ENCODE measurements at regions of chr1 and their contacts with region 1.

Region 1: DNA sequence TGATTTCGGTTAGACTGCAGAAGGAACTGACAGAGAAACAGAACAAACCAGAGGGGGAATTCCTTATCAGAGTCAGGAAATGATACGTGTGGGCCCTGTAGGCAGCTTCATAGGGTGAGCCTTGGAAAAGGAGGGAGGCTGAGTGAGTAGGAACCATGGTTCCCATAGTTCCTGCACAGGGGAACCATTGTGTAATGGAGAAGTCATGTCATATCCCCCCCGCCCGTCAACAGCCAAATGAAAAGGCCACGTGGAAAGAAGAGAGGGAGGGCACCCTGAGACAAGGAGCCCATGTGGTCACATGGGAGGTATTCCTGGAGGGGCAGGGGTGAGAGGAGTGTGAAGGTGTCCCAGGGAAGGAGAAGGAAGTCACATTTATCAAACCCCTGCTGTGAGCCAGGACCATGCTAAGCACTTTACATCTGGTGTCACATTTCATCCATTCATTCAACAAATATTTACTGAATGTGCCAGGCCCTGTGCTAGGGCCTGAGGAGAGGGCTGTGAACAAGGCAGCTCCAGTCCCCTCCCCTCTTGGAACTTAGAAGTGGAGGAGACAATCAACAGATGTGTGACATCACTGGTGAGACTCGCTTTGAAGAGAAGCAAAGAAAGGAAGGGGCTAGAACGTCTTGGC is 15.7 kb upstream of the FGR start:
- DNase-seq: no peak
- CTCF ChIP-seq: no peak

Region 2: DNA sequence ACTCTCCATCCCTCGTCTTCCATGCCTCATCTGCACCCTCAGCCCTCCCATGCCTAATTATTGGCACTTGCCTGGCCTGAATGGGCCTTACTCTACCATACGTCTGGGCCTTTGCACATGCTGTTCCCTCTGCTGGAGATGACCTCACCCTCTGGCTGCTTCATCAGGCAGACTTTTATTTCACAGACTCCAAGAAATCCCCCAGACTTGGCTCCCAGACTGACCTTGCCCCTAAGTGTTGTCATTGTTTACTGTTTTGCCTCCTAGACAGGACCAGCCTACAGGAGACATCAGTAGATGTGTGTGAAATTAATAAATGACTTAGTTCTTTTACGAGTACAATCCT is 41.5 kb before region 1 on chr1:
- CTCF ChIA-PET with region 1: interaction called, 13 read pairs
- POLR2A ChIA-PET with region 1: no interaction called
- DNase-seq: no peak
- CTCF ChIP-seq: no peak

Region 3: GRCh38 chr1:27638047-27638734 is 12.5 kb before region 1 on chr1:
- CTCF ChIA-PET with region 1: interaction called, 26 read pairs
- POLR2A ChIA-PET with region 1: no interaction called
- DNase-seq: no peak
- CTCF ChIP-seq: no peak